Dorsolateral prefrontal cortex (tissue), 120 donors: ENCODE measurements at regions of chr11 and their contacts with region 1.

Region 1: DNA sequence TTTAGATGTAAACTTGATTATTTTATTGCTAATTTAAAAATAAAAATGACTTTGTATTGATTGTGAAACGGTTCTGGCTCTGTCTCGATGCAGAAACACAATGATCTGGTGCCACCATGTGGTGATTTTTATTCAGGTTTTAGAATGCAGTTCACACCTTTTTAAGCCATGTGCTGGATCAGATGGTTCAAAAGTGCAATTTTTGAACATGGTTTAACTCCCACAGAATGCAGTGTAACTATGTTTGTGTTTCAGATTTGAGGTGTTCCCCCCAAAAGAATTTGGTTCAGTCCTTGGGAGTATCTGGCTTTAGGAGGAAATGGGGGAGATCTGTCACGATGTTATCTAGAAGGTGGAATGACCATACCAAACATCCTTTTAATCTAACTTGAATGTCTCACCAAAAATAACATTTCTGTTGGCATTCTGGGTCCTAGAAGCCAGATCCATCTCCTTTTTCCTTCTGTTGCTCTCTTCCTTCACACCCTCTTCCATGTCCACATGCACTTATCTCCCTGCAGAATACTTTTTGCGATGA is 7.9 kb downstream of the MRPL16 start:
- DNase-seq: peak in 2 of 10 donors; percentile 30 to 35
- H3K4me3 ChIP-seq: peak overlapping the region in 23 of 59 donors; percentile 1 to 41 (median 24)
- H3K27ac ChIP-seq: peak overlapping the region in 41 of 59 donors; percentile 8 to 73 (median 44)
- H3K27me3 ChIP-seq: no peaks in the 10 kb centered on the region
- CTCF ChIP-seq: peak; percentile 65 to 93 (median 81)

Region 2: GRCh38 chr11:59534676-59535075 is 268.0 kb before region 1 on chr11:
- intact Hi-C with region 1: loop called (anchors 2 to 10 kb)
- DNase-seq: no peak
- H3K4me3 ChIP-seq: no peak overlapping the region
- H3K27ac ChIP-seq: no peak overlapping the region
- H3K27me3 ChIP-seq: no peaks in the 10 kb centered on the region
- CTCF ChIP-seq: no peak

Region 3: DNA sequence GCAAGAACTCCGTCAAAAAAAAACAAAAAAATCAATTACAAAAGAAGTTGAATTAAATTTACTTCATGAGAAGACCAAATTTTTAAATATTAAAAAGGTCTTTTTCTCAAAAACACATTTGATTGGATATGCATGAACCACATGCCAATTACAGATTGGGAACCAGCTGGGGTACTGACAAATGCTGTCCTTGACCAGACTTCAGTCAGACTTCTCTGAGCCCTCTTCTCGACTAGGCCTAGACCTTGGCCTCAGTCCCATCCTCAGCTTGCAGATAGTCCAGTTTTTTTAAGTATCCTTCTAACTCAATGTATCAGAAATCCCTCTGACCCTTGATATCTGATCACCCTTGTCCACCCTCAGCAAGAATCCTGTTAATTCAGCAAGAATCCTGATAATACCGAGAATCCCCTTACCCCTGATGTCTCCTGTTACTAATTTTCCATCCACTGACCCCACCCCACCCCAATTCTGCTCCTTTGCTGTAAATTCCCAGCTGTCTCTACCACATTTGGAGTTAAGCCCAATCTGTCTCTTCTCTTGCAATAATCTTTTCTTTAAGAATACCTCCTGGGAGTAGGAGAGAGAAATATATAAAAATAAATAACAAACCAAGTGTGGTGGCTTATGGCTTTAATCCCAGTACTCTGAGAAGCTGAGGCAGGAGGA is 260.4 kb before region 1 on chr11:
- intact Hi-C with region 1: loop called (anchors 2 to 10 kb)
- DNase-seq: no peak
- H3K4me3 ChIP-seq: no peak overlapping the region
- H3K27ac ChIP-seq: no peak overlapping the region
- H3K27me3 ChIP-seq: no peaks in the 10 kb centered on the region
- CTCF ChIP-seq: no peak

Region 4: GRCh38 chr11:59668950-59669610 is 133.6 kb before region 1 on chr11 and contains the start of gene PATL1:
- intact Hi-C with region 1: loop called (anchors 2 to 5 kb)
- DNase-seq: peak; percentile 98 to 99 (median 98)
- H3K4me3 ChIP-seq: peak within 1 kb of the TSS; percentile 62 to 97 (median 87)
- H3K27ac ChIP-seq: peak within 1 kb of the TSS; percentile 91 to 100 (median 99)
- H3K27me3 ChIP-seq: no peaks in the 10 kb centered on the region
- CTCF ChIP-seq: peak in 23 of 56 donors; percentile 3 to 52 (median 29)
- total RNA-seq, gene PATL1: 14.6 to 38.0 (median 20.9) TPM